Stomach (tissue), 19 donors: ENCODE measurements at regions of chr16 and their contacts with region 1.

Region 1: GRCh38 chr16:27313422-27314160 is at the start of gene IL4R:
- DNase-seq: peak; percentile 77 to 83
- H3K4me3 ChIP-seq: peak within 1 kb of the TSS; percentile 71 to 98 (median 86)
- H3K27ac ChIP-seq: peak within 1 kb of the TSS; percentile 93 to 100 (median 100)
- H3K4me1 ChIP-seq: peaks cover 36 to 51% (median 47%) of the 10 kb centered on the region in 4 donors
- H3K27me3 ChIP-seq: no peaks in the 10 kb centered on the region
- CTCF ChIP-seq: peak in 1 of 7 experiments; percentile 14
- EP300 ChIP-seq: no peak
- POLR2A ChIP-seq: peak in 1 of 4 donors; percentile 26
- total RNA-seq, gene IL4R: 23.9 to 120 (median 55.2) TPM

Region 2: DNA sequence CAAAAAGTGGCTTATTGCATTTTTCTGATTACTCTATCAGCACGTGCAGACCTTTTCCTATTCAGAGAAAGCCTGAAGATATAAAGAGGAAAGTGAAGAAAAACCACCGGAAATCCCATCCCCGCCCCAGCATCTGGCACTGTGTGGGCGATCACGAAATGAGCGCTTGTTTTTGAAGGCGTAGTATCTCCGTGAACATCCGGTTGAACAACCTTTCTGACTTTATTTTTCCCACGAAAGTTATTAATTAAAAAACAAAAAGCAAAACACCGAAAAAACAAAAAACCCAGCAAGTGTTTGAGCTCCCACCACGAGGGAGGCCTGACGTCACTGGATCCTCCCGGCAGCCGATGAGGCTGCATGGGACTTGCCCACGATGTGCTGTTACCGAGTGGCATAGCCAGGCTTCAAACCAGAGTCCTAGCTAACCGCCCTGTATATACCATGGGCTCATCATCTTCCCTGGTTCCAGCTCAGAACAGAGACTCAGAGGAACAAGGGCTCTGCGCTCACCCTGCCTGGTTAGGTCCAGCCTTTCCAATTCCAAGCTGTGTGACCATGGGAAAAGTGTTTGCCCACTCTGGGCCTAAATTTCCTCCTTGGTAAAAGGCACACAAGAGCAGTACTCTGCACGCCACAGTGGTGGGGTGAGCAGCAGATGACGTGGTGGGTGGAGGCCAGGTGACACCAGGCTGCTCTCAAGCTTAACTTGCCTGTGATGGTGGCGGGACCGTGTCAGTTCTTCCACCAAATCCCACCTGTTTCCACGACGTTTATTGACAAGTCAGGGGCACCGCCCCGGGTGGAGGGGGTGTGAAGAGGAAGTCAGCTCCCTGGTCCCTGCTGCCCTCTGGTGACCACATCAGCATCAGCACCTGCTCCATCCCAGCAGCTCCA is 54.1 kb after region 1 on chr16:
- intact Hi-C with region 1: loop called (anchors 10 kb)
- DNase-seq: peak; percentile 80 to 90
- H3K4me3 ChIP-seq: peak overlapping the region; percentile 0 to 36 (median 22)
- H3K27ac ChIP-seq: peak overlapping the region; percentile 5 to 75 (median 72)
- H3K4me1 ChIP-seq: peaks cover 30 to 46% (median 40%) of the 10 kb centered on the region in 4 donors
- H3K27me3 ChIP-seq: no peaks in the 10 kb centered on the region
- CTCF ChIP-seq: peak in 5 of 7 experiments; percentile 59 to 87 (median 78)
- EP300 ChIP-seq: no peak
- POLR2A ChIP-seq: no peak